HAP-1 (cell line): ENCODE measurements at regions of chr17 and their contacts with region 1.

Region 1: GRCh38 chr17:17206124-17206912 is at the start of gene PLD6:
- DNase-seq: peak; percentile 84 to 99
- H3K4me3 ChIP-seq: peak within 1 kb of the TSS; percentile 62
- H3K4me1 ChIP-seq: peaks cover 23% of the 10 kb centered on the region
- H3K27me3 ChIP-seq: no peaks in the 10 kb centered on the region

Region 2: DNA sequence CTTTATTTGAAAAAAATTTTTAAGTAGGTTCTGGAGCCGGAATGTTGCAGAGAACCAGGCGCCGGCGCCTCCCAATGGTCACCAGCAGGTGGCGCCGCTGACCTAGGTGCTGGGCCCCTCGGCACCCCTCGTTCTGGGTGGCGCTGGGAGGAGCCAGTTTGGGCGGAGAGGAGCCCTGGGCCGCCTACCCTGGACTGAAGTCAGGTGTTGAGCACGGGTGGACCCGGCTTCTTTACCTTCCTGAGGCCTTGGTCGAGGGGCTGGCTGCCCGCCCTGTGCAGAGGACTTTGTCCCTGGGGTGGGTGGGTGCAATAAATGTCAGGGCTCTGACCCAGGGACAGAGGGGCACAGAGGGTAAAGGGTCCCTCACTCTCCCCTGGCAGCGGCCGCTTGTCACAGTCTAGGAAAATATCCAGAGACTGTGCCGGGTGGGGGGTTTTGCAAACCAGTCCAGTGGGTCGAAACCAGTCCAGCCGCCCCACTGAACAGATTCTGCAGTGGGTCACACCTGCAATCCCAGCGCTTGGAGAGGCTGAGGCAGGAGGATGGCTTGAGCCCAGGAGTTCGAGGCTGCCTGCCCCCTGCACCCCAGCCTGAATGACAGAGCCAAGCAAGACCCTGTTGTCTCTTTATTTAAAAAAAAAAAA is 204.3 kb before region 1 on chr17:
- in situ Hi-C with region 1: loop called (anchors 10 kb)
- DNase-seq: peak; percentile 69 to 89
- H3K4me3 ChIP-seq: no peak overlapping the region
- H3K4me1 ChIP-seq: no peaks in the 10 kb centered on the region
- H3K27me3 ChIP-seq: no peaks in the 10 kb centered on the region

Region 3: DNA sequence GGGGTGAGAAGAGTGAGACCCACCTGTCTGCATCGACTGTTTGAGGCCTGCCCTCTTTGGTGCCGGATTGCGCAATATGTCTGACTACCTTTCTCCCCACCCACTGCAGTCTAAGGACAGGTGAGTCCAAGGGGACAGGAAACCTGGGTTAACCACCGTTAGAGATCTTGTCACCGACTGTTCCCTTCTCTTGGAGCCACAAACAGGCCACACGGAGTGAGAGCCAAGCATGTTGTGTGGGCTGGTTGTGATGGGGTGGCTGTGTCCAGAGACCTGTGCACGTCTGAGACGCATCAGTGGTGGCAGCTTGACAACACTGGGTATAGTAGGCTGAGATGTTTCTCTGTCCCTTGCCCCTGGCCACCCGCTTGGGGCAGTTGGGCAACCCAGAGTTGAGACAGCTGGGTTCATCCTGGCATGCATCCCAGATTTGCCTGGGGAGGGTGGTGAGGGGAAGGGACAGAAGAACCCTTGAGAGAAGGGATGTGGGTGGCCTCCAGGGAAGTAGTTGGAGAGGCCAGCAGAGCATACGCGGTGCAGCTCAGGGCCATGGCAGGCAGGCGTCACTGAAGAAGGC is 142.7 kb before region 1 on chr17:
- in situ Hi-C with region 1: no loop called
- DNase-seq: no peak
- H3K4me3 ChIP-seq: no peak overlapping the region
- H3K4me1 ChIP-seq: no peaks in the 10 kb centered on the region
- H3K27me3 ChIP-seq: no peaks in the 10 kb centered on the region

Region 4: GRCh38 chr17:17151962-17152361 is 54.4 kb before region 1 on chr17:
- in situ Hi-C with region 1: loop called (anchors 5 kb)
- DNase-seq: no peak
- H3K4me3 ChIP-seq: no peak overlapping the region
- H3K4me1 ChIP-seq: no peaks in the 10 kb centered on the region
- H3K27me3 ChIP-seq: no peaks in the 10 kb centered on the region

Region 5: GRCh38 chr17:17792551-17793377 is 586.4 kb after region 1 on chr17:
- in situ Hi-C with region 1: no loop called
- DNase-seq: no peak
- H3K4me3 ChIP-seq: no peak overlapping the region
- H3K4me1 ChIP-seq: no peaks in the 10 kb centered on the region
- H3K27me3 ChIP-seq: no peaks in the 10 kb centered on the region